Cardiac septum (tissue), 1 donor: ENCODE measurements at regions of chr6 and their contacts with region 1.

Region 1: DNA sequence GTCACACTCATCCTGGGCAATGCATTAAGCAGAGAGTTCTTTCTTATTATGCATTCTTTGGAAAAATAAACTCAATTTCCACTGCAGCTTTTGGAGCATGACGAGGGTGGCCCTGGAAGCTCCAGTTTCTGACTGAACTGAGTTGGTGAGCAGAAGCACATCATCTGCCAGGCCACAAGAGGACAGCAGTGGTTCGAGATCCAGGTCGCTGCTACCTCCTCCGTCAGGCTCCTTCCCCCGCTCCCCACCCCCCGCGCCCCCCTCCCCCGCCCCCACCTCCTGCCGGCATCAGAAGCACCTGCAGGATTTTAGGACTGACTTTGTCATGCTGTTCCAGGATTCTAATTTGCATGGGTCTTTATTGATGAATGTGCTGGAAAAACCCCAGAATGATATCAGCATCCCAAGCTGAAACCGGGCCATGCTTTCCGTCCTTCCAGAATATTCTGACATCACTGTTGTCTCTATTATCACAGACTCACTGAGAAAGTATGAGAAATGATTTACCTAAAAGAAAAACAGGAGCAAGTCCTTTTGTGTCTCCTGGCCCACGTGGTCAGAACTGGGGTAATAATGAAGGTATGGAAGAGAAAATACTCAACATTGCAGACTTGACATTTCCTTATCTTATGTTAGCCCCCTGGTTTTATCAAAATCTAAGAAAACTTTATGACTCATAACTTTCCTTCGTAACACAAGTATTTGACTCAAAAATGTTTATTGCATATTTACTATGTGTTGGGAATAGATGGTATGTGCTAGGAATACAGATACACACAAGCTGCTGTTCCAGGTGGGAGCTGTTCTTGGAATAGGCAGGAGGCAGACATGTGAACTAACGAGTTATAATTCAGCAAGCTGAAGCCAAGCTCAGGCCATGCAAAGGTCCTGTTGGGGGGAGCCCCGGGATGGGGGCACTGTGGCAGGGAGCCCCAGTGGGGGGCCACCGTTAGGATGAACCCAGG is 220.2 kb upstream of the EXOC2 start:
- DNase-seq: no peak

Region 2: DNA sequence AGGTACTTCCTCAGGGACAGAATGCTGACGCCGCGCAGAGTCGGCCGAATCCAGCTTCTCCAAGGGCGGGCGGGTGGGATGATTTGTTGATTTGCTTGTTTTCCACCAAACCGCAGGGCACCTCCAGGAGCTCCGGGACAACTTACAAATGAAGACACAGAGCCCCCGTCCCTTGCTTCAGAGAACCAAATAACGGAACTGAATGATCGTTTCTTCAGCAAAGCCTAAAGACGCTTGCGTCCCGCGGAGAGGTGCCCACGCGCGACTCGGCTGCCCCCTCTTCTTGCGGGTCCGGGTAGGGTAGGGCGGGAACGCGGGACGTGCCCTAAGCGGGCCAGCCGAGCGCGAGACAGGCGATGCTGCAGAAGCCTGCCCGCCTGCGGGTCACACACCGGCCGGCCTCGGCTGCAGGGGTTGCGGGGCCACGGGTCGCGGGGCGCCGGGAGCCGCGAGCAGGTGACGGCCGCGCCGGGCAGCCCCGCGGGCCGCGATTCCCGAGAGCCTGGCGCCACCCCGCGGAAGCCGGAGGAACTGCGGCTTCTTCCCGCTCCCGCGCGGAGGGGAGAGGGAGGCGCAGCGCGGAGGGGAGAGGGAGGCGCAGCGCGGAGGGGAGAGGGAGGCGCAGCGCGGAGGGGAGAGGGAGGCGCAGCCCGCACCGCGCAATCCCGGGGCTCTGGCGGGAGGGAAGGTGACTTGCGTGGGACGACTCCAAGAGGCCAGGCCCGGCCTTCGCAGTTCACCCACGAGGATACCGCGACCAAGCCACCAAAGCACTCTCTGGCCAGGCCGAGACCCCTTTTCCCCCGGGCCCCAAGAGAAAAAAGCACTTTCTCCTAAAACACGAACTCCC is 468.6 kb after region 1 on chr6:
- intact Hi-C with region 1: loop called (anchors 5 kb)
- DNase-seq: no peak